Activated CD8-positive, alpha-beta memory T cell treated with anti-CD3 and anti-CD28 coated beads, Interleukin-2, amount 10 ng/mL, durations not matched to agents 7 days and 5 days (primary cell): ENCODE measurements at regions of chr11 and their contacts with region 1.

Region 1: GRCh38 chr11:7571640-7572000 is 57.8 kb downstream of the PPFIBP2 start:
- DNase-seq: no peak
- ATAC-seq: no peak
- H3K4me3 Mint-ChIP-seq: no peak overlapping the region
- H3K27ac Mint-ChIP-seq: no peak overlapping the region
- H3K4me1 Mint-ChIP-seq: peaks cover 14% of the 10 kb centered on the region
- H3K27me3 Mint-ChIP-seq: peaks cover 7% of the 10 kb centered on the region

Region 2: DNA sequence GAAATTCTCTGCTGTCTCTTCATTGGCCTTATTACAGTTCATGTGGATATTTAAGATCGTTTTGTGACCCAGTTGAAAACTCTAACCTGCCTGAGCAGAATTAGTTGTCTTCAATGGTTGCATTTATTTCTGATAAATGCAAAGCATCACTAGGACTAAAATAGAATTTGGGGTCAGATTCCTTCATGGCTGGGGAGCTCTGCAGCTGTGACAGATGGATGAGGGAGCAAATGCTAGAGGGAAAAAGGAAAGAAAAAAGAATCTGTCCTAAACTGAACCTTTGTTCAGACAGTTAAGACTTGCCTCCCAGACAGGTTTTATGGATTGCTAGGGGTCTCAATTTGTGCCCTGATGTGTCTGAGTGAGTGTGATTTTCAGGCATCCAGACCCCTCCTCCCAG is 207.0 kb before region 1 on chr11:
- CTCF ChIA-PET with region 1: no interaction called
- DNase-seq: no peak
- ATAC-seq: no peak
- H3K4me3 Mint-ChIP-seq: no peak overlapping the region
- H3K27ac Mint-ChIP-seq: no peak overlapping the region
- H3K4me1 Mint-ChIP-seq: no peaks in the 10 kb centered on the region
- H3K27me3 Mint-ChIP-seq: no peaks in the 10 kb centered on the region

Region 3: DNA sequence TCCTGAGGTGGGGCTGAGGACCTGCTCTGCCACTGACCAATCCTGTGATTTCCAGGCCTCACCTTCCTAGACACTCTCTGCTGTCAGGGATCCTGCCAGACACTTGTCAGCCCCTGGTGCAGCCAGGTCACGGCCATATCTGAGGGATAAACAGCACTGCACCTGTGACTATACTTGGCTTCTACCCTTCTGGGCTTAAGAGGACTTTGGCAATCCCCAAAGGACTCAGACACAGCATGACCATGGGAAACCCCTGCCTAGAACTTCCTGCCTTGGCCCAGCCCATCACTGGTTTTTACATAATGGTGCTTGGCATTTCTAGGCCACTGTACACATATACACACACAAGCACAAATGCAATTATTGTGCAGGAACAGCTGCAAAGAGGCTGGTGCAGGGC is 97.9 kb before region 1 on chr11:
- CTCF ChIA-PET with region 1: no interaction called
- DNase-seq: no peak
- ATAC-seq: no peak
- H3K4me3 Mint-ChIP-seq: no peak overlapping the region
- H3K27ac Mint-ChIP-seq: no peak overlapping the region
- H3K4me1 Mint-ChIP-seq: no peaks in the 10 kb centered on the region
- H3K27me3 Mint-ChIP-seq: no peaks in the 10 kb centered on the region

Region 4: DNA sequence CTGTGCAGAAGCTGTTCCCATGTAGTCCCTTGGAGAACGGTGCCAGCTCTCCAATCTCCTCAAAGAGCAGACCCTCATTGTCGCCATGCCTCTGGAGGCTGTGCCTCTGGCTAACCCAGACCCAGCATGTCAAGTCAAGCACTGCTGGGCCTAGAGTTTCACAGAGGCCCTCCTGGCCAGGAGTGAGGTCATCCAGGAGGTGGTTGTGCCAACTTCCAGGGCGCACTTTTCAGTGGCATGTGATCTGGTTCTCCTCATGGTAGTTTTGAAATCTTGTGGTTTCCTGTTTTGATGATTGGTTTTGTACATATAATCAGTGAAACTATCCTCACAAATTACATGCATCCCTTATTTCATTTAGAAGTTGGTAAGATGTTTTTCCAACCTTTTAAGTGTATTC is 21.1 kb after region 1 on chr11:
- CTCF ChIA-PET with region 1: interaction called, 11 read pairs
- DNase-seq: no peak
- ATAC-seq: no peak
- H3K4me3 Mint-ChIP-seq: no peak overlapping the region
- H3K27ac Mint-ChIP-seq: no peak overlapping the region
- H3K4me1 Mint-ChIP-seq: peaks cover 17% of the 10 kb centered on the region
- H3K27me3 Mint-ChIP-seq: no peaks in the 10 kb centered on the region

Region 5: DNA sequence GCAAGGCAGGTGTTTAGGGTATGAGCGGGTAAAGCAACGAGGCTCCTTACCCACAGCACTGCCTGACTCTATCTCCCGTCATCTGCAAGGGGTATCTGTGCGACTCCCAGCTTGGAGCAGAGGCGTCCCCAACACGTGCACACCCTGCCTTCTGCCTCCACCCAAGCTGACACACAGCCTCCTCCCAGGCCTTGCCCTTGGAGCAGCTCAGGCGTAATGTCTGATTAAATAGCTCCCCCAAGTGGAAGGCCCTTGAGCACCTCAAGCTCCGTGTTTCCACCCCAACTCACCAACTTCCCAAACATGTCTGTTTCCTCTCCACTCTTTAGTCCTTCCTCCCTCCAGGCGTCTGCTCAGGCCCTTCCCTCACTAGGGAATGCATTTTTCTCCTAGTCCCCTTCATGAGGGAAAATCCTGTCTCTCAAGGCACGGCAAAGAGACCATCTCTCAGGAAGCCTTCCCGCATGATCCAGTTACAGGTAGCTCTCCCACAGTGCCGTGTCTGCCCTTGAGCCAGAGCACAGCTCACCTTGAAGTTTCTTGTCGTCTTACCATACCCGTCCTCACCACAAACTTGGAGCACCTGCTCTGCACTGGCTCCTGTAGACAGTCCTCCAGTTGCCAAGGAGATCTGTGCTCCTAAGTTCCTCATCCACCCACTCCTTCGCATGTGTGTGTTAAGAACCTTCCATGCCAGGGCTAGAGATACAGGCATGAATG is 85.8 kb after region 1 on chr11:
- CTCF ChIA-PET with region 1: interaction called, 10 read pairs
- DNase-seq: peak; percentile 54
- ATAC-seq: peak; percentile 76
- H3K4me3 Mint-ChIP-seq: no peak overlapping the region
- H3K27ac Mint-ChIP-seq: no peak overlapping the region
- H3K4me1 Mint-ChIP-seq: no peaks in the 10 kb centered on the region
- H3K27me3 Mint-ChIP-seq: no peaks in the 10 kb centered on the region

Region 6: GRCh38 chr11:8006349-8006977 is 434.8 kb after region 1 on chr11:
- CTCF ChIA-PET with region 1: no interaction called
- DNase-seq: peak; percentile 53
- ATAC-seq: peak; percentile 73
- H3K4me3 Mint-ChIP-seq: no peak overlapping the region
- H3K27ac Mint-ChIP-seq: no peak overlapping the region
- H3K4me1 Mint-ChIP-seq: no peaks in the 10 kb centered on the region
- H3K27me3 Mint-ChIP-seq: peaks cover 5% of the 10 kb centered on the region